SK-N-SH (cell line): ENCODE measurements at regions of chr1 and their contacts with region 1.

Region 1: GRCh38 chr1:202122639-202123335 is at the start of gene GPR37L1:
- DNase-seq: peak; percentile 91
- H3K4me3 ChIP-seq: no peak within 1 kb of the TSS
- H3K27ac ChIP-seq: no peak within 1 kb of the TSS
- H3K4me1 ChIP-seq: peaks cover 0 to 9% of the 10 kb centered on the region in 2 experiments; a peak in 1 of 4 replicates
- H3K27me3 ChIP-seq: no peaks in the 10 kb centered on the region
- CTCF ChIP-seq: peak; percentile 51
- EP300 ChIP-seq: no peak
- RAD21 ChIP-seq: peak; percentile 58
- polyA plus RNA-seq, gene GPR37L1: not detected in 2 replicates

Region 2: DNA sequence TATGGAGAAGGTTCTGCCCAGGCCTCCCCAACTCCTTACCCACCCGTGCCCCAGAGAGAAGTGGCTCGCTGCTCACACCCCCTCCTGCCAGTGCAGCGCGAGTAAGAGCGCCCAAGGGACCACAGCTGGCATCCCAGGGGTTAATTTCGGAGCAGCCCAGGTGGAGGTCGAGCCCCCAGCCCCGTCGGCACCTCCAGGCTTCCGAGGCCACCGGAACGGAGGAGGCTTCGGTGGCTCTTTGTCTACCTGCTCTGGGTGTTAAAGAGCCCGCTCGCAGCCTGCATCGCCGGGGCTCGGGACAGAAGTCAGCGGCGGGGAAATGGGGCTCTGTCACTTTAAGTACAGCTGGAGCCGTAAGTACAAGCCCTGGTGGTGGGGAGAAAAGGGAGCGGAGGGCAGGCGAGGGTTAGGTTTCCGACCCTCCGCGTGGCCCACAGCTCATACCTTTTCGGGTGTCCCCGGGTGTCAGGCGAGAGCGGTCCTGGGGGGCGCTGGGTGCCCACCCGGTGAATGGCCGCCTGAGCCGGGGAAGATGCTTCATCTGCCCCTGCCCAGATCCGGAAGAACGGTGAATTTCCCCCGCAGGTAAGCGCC is 383.2 kb before region 1 on chr1:
- CTCF ChIA-PET with region 1: no interaction called
- POLR2A ChIA-PET with region 1: no interaction called
- DNase-seq: peak; percentile 85
- H3K4me3 ChIP-seq: peak overlapping the region; percentile 53 to 66
- H3K27ac ChIP-seq: peak overlapping the region in 1 of 2 experiments; percentile 98; a peak in 3 of 4 replicates
- H3K4me1 ChIP-seq: peaks cover 25 to 54% of the 10 kb centered on the region in 2 experiments; a peak in 3 of 4 replicates
- H3K27me3 ChIP-seq: no peaks in the 10 kb centered on the region
- CTCF ChIP-seq: no peak
- EP300 ChIP-seq: no peak
- RAD21 ChIP-seq: no peak

Region 3: GRCh38 chr1:202009326-202010179 is 113.2 kb before region 1 on chr1:
- CTCF ChIA-PET with region 1: interaction called, 411 read pairs
- POLR2A ChIA-PET with region 1: interaction called, 5 read pairs
- DNase-seq: peak; percentile 90
- H3K4me3 ChIP-seq: no peak overlapping the region; a peak in 1 of 4 replicates
- H3K27ac ChIP-seq: no peak overlapping the region
- H3K4me1 ChIP-seq: peaks cover 0 to 3% of the 10 kb centered on the region in 2 experiments; a peak in 1 of 4 replicates
- H3K27me3 ChIP-seq: no peaks in the 10 kb centered on the region
- CTCF ChIP-seq: peak; percentile 96
- EP300 ChIP-seq: no peak
- RAD21 ChIP-seq: peak; percentile 90

Region 4: GRCh38 chr1:202105539-202106276 is 17.1 kb before region 1 on chr1:
- CTCF ChIA-PET with region 1: interaction called, 52 read pairs
- POLR2A ChIA-PET with region 1: no interaction called
- DNase-seq: no peak
- H3K4me3 ChIP-seq: no peak overlapping the region
- H3K27ac ChIP-seq: no peak overlapping the region
- H3K4me1 ChIP-seq: peaks cover 0 to 15% of the 10 kb centered on the region in 2 experiments; a peak in 1 of 4 replicates
- H3K27me3 ChIP-seq: no peaks in the 10 kb centered on the region
- CTCF ChIP-seq: no peak
- EP300 ChIP-seq: no peak
- RAD21 ChIP-seq: no peak

Region 5: DNA sequence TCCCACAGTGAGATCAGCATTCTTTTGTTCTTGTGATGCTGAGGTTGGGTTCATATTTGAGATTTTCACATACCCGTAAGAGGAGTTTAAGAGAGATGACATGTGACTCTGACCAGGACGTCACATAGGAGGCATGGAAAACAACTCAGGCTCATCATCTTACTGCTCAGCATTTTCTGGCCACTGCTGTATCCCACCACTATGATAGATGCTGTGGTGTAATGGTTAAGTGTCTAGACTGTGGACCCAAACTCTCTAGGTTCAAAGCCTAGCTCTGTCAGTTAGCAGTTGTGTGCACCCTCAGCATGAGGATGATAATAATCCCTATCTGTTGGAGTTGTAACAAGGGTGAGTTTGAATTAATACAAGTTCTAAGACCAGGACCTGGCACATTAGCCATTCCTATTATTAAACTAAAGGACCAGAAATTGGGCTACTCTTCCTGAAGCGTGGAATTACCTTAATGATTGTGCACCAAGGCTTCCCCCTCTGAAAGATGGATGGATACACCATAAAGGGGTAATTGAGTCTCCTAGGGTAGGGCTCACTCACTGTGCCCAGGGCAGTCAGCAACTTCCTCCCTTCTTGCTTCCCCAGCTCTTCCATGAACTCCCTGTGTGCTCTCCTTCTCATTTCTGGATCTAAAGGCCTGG is 111.7 kb after region 1 on chr1:
- CTCF ChIA-PET with region 1: no interaction called
- POLR2A ChIA-PET with region 1: no interaction called
- DNase-seq: no peak
- H3K4me3 ChIP-seq: no peak overlapping the region
- H3K27ac ChIP-seq: no peak overlapping the region
- H3K4me1 ChIP-seq: peaks cover 9 to 12% of the 10 kb centered on the region in 2 experiments; a peak in 2 of 4 replicates
- H3K27me3 ChIP-seq: no peaks in the 10 kb centered on the region
- CTCF ChIP-seq: no peak
- EP300 ChIP-seq: no peak
- RAD21 ChIP-seq: no peak